Ascending aorta (tissue), 2 donors: ENCODE measurements at regions of chr10 and their contacts with region 1.

Region 1: GRCh38 chr10:58791137-58791536 is 278.5 kb downstream of the BICC1 start:
- DNase-seq: no peak
- H3K4me3 ChIP-seq: no peak overlapping the region
- H3K27ac ChIP-seq: peak overlapping the region; percentile 26 to 48
- H3K4me1 ChIP-seq: no peaks in the 10 kb centered on the region
- H3K27me3 ChIP-seq: no peaks in the 10 kb centered on the region
- CTCF ChIP-seq: no peak

Region 2: DNA sequence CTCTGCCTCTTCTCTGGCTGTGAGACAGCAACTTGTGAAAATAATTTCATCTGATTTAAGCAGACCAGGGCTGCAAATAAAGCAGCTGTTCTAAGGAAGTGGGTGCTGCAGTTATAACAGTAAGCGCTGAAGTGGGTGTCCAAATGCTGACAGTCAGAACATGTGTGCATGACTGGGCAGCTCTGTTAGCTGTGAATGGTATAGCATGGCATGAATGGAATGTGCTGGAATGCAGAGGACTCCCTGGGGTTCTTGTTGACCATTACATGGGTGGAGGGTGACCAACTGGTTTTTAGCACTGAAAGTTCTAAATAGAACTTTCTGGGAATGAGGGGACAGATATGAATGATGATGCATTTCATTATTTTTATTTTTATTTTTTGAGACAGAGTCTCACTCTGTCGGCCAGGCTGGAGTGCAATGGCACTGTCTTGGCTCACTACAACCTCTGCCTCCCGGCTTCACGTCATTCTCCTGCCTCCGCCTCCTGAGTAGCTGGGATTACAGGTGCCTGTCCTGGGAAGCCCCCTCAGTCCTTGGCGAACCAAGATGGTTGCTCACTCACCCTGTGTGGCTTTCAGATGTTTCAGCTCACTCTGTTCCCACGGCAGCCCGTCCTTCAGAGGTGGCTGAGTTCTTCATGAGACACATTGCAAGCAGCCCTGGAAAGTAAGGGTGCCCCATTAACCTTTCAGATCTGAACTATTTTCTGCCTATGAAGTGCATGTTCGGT is 65.5 kb after region 1 on chr10:
- intact Hi-C with region 1: loop called (anchors 5 kb)
- DNase-seq: peak; percentile 16 to 87
- H3K4me3 ChIP-seq: no peak overlapping the region
- H3K27ac ChIP-seq: peak overlapping the region; percentile 58 to 80
- H3K4me1 ChIP-seq: peaks cover 4 to 16% of the 10 kb centered on the region in 2 donors
- H3K27me3 ChIP-seq: no peaks in the 10 kb centered on the region
- CTCF ChIP-seq: no peak